Motor neuron (in vitro differentiated cells): ENCODE measurements at regions of chr11 and their contacts with region 1.

Region 1: GRCh38 chr11:8080674-8081590 is at the start of gene TUB:
- ATAC-seq: peak; percentile 43 to 78 (median 63)
- H3K4me3 ChIP-seq: peak within 1 kb of the TSS; percentile 41 to 80 (median 54)
- H3K27ac ChIP-seq: peak within 1 kb of the TSS; percentile 29 to 80
- H3K4me1 ChIP-seq: peaks cover 50 to 63% of the 10 kb centered on the region in 2 donors
- total RNA-seq, gene TUB: 0.76 to 57.2 (median 25.7) TPM

Region 2: GRCh38 chr11:8019314-8020243 is 61.4 kb before region 1 on chr11:
- in situ Hi-C with region 1: loop called in 1 of 9 experiments (anchors 5 kb)
- ATAC-seq: peak; percentile 17 to 67 (median 60)
- H3K4me3 ChIP-seq: peak overlapping the region; percentile 45 to 72 (median 66)
- H3K27ac ChIP-seq: peak overlapping the region; percentile 49 to 67
- H3K4me1 ChIP-seq: peaks cover 22 to 23% of the 10 kb centered on the region in 2 donors

Region 3: DNA sequence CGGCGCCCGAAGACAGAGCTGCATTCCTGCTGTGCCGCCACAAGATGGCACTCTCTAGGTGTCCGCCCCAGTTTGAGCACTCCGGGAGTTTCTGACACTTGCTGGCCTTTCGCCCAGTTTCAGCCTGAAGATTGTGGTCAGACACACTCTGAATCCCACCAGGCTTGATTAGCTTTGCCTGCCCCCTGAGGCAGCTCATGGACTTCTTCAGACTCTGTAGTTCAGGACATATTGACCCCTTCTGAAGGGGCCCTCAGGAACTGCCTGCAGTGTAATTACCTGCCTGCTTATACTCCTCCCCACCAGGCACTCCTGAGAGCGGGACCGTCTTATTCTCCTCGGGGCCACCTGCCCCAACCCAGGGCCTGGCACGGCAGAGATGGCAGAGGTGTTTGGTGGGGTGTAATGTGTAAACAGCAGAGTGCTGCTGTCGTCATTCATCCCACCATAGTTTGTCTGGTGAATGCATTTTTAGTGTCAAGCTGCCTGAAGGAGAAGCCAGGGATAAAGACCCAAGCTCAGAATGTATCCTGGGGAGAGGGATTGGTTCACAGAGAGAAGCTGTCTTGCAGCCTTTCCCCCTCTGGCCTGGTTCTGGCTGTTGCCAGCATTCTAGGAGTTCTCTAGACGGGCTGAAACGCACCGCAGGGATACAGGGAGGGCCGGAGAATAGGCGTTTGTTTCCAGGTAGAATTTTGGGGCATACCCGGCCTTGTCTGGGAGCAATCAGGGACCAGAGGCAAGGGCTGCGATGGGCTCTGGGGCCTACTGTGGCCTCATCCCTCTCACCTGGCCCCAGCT is 47.4 kb before region 1 on chr11:
- in situ Hi-C with region 1: loop called in 1 of 9 experiments (anchors 10 kb)
- ATAC-seq: peak; percentile 70 to 94 (median 87)
- H3K4me3 ChIP-seq: no peak overlapping the region
- H3K27ac ChIP-seq: no peak overlapping the region
- H3K4me1 ChIP-seq: peaks cover 37 to 51% of the 10 kb centered on the region in 2 donors